Activated CD8-positive, alpha-beta memory T cell treated with anti-CD3 and anti-CD28 coated beads, Interleukin-2, amount 10 ng/mL, durations not matched to agents 7 days and 5 days (primary cell): ENCODE measurements at regions of chr20 and their contacts with region 1.

Region 1: GRCh38 chr20:47411161-47411560 is 54.7 kb upstream of the ZMYND8 start:
- DNase-seq: no peak
- ATAC-seq: no peak
- H3K4me3 Mint-ChIP-seq: no peak overlapping the region
- H3K27ac Mint-ChIP-seq: no peak overlapping the region
- H3K4me1 Mint-ChIP-seq: peaks cover 36% of the 10 kb centered on the region
- H3K27me3 Mint-ChIP-seq: no peaks in the 10 kb centered on the region

Region 2: GRCh38 chr20:47487175-47487917 is 76.2 kb after region 1 on chr20:
- CTCF ChIA-PET with region 1: interaction called, 10 read pairs
- DNase-seq: peak; percentile 83
- ATAC-seq: peak; percentile 87
- H3K4me3 Mint-ChIP-seq: peak overlapping the region; percentile 54
- H3K27ac Mint-ChIP-seq: peak overlapping the region; percentile 98
- H3K4me1 Mint-ChIP-seq: peaks cover 68% of the 10 kb centered on the region
- H3K27me3 Mint-ChIP-seq: no peaks in the 10 kb centered on the region